AG04450 (cell line): ENCODE measurements at regions of chr10 and their contacts with region 1.

Region 1: GRCh38 chr10:118568327-118568848 is 27.1 kb downstream of the PRLHR start:
- DNase-seq: peak; percentile 10
- H3K4me3 ChIP-seq: peak overlapping the region; percentile 35
- H3K27ac ChIP-seq: no peak overlapping the region
- H3K27me3 ChIP-seq: peaks cover 17% of the 10 kb centered on the region
- CTCF ChIP-seq: peak; percentile 80

Region 2: GRCh38 chr10:118547282-118547681 is 21.1 kb before region 1 on chr10:
- CTCF ChIA-PET with region 1: interaction called, 11 read pairs
- POLR2A ChIA-PET with region 1: no interaction called
- DNase-seq: no peak
- H3K4me3 ChIP-seq: no peak overlapping the region
- H3K27ac ChIP-seq: no peak overlapping the region
- H3K27me3 ChIP-seq: no peaks in the 10 kb centered on the region
- CTCF ChIP-seq: no peak

Region 3: GRCh38 chr10:118674226-118674919 is 106.0 kb after region 1 on chr10:
- CTCF ChIA-PET with region 1: interaction called, 10 read pairs
- POLR2A ChIA-PET with region 1: no interaction called
- DNase-seq: no peak
- H3K4me3 ChIP-seq: no peak overlapping the region
- H3K27ac ChIP-seq: no peak overlapping the region
- H3K27me3 ChIP-seq: no peaks in the 10 kb centered on the region
- CTCF ChIP-seq: no peak

Region 4: GRCh38 chr10:118698421-118698820 is 130.0 kb after region 1 on chr10:
- CTCF ChIA-PET with region 1: interaction called, 21 read pairs
- POLR2A ChIA-PET with region 1: no interaction called
- DNase-seq: no peak
- H3K4me3 ChIP-seq: no peak overlapping the region
- H3K27ac ChIP-seq: no peak overlapping the region
- H3K27me3 ChIP-seq: no peaks in the 10 kb centered on the region
- CTCF ChIP-seq: no peak

Region 5: DNA sequence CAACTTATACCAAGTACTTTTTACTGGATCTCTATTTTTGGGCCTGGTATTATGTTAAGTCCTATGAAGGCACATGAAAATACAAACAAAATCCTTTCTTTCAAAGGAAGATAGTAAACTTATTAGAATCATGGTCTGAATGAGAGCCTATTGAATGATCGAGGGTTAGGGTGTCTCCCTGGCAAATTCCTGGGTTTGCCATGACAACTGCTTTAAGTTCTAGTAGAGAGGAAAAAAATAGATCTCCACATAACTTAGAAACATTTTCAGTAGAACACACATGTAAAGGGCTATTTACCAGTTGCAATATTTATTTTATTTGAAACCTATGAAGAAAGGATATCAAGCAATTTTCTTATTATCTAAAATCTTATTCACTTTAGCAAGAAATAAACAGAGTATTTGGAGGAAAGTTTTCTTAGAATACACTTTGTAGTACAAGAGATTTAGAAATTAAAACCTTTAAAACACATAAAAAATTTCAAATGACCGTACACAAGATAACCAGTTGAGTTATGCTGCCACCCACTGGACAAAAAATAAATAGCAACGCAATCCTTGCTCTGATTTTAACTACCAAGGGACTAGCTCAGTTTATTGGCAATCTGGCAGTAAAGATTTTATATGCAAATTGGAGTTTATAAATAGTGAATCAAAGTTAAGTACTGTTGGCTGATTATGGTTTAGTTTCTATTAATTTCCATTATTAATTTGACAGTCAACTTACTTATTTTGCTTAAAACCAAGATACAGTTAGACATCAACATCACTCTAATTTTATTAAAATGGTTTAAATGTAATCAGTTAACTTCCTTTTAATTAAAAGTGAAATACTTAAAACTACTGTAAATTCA is 152.5 kb after region 1 on chr10:
- CTCF ChIA-PET with region 1: interaction called, 175 read pairs
- POLR2A ChIA-PET with region 1: no interaction called
- DNase-seq: peak; percentile 33
- H3K4me3 ChIP-seq: no peak overlapping the region
- H3K27ac ChIP-seq: no peak overlapping the region
- H3K27me3 ChIP-seq: no peaks in the 10 kb centered on the region
- CTCF ChIP-seq: peak; percentile 79

Region 6: GRCh38 chr10:118754720-118755480 is 186.5 kb after region 1 on chr10 and contains the start of gene CACUL1:
- CTCF ChIA-PET with region 1: interaction called, 17 read pairs
- POLR2A ChIA-PET with region 1: interaction called, 3 read pairs
- DNase-seq: peak; percentile 100
- H3K4me3 ChIP-seq: peak within 1 kb of the TSS; percentile 95
- H3K27ac ChIP-seq: peak within 1 kb of the TSS; percentile 81
- H3K27me3 ChIP-seq: no peaks in the 10 kb centered on the region
- CTCF ChIP-seq: no peak
- polyA plus RNA-seq, gene CACUL1: 12.4 and 15.3 TPM in 2 replicates

Region 7: GRCh38 chr10:118850418-118851061 is 282.2 kb after region 1 on chr10:
- CTCF ChIA-PET with region 1: interaction called, 18 read pairs
- POLR2A ChIA-PET with region 1: no interaction called
- DNase-seq: no peak
- H3K4me3 ChIP-seq: no peak overlapping the region
- H3K27ac ChIP-seq: no peak overlapping the region
- H3K27me3 ChIP-seq: no peaks in the 10 kb centered on the region
- CTCF ChIP-seq: peak; percentile 51